Adrenal gland (tissue), 19 donors: ENCODE measurements at regions of chr3 and their contacts with region 1.

Region 1: GRCh38 chr3:195863121-195864006 is 45.0 kb downstream of the TNK2 start:
- DNase-seq: peak; percentile 89 to 97 (median 95)
- H3K4me3 ChIP-seq: no peak overlapping the region
- H3K27ac ChIP-seq: peak overlapping the region in 3 of 5 donors; percentile 31 to 72 (median 70)
- H3K4me1 ChIP-seq: peaks cover 0 to 18% of the 10 kb centered on the region in 2 donors
- H3K27me3 ChIP-seq: no peaks in the 10 kb centered on the region
- CTCF ChIP-seq: peak; percentile 85 to 96 (median 94)
- POLR2A ChIP-seq: no peak

Region 2: DNA sequence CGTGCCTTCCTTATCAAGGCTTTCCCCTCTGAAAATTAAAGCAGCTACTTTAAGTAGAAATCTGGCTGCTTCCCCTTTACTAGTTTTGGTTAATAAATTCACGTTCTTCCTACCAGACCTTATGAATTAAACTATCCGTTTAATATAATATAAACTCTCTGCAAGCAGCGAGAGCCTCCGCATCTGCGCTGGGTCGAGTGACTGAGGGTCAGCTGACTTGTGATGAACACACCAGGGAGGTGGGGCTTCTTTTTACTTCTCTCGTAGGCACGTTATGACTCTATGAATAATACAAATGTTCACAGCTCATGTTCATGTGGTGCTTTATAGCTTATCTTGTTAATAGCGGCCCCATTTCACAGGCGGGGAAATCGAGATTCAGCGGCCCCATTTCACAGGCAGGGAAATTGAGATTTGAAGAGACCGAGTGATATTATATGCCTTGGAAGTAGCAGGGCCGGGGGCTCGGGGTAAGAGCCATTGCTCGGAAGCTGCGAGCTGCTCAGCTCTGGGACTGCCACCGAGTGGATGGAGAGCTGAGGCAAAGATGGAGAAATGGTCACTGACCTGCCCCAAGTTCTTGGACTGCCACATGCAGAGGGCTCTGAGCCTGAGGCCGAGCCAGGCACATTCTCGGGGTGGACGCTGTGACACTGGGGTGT is 59.9 kb before region 1 on chr3:
- intact Hi-C with region 1: no loop called
- DNase-seq: peak in 1 of 7 donors; percentile 10
- H3K4me3 ChIP-seq: no peak overlapping the region
- H3K27ac ChIP-seq: no peak overlapping the region
- H3K4me1 ChIP-seq: peaks cover 0 to 5% of the 10 kb centered on the region in 2 donors
- H3K27me3 ChIP-seq: no peaks in the 10 kb centered on the region
- CTCF ChIP-seq: no peak
- POLR2A ChIP-seq: no peak

Region 3: DNA sequence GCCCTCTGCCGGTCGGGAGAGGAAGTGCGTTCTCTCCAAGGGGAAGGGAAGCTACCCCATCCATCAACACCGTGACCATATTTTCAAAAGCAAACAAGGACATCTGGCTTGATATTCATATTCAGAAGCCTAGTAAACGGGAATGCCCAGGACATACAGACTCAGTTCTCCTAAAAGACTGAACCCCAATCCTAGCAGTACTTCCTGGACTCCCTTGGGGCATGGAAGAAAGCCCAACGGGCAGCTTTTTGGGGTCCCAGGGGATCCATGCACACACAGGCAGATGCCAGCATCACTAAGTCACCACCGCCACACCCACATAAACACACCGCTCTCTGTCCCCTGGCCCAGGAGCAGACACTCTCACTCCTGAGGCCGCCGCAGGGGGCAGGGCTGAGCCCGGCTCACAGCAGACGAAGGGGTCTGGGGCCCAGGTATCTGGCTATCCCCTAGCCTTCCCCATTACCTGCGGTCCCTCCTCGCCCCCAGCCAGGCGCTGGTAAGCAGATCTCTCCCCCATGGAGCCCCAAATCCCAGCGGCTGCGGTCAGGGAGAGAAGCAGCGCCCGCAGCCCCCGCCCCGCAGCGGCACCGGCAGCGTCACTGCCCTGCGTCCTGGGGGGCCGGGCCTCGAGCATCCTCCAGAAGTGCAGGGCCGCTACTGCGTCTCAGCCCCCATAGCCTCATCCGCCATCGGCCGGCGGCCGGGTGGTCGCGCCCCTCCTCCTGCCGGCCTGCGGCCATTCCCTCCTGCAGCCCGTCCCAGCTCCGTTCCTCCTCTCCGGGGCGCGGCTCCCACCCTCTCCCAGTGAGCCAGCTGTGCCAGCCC is 31.6 kb after region 1 on chr3:
- intact Hi-C with region 1: loop called (anchors 2 kb)
- DNase-seq: peak in 5 of 7 donors; percentile 27 to 74 (median 40)
- H3K4me3 ChIP-seq: peak overlapping the region in 2 of 4 donors; percentile 23 to 72
- H3K27ac ChIP-seq: peak overlapping the region in 4 of 5 donors; percentile 62 to 91 (median 86)
- H3K4me1 ChIP-seq: peaks cover 24 to 46% of the 10 kb centered on the region in 2 donors
- H3K27me3 ChIP-seq: no peaks in the 10 kb centered on the region
- CTCF ChIP-seq: peak; percentile 90 to 97 (median 94)
- POLR2A ChIP-seq: no peak

Region 4: GRCh38 chr3:195914648-195915473 is 51.5 kb after region 1 on chr3:
- intact Hi-C with region 1: loop called (anchors 2 to 5 kb)
- DNase-seq: peak; percentile 92 to 99 (median 98)
- H3K4me3 ChIP-seq: no peak overlapping the region
- H3K27ac ChIP-seq: peak overlapping the region in 4 of 5 donors; percentile 18 to 88 (median 59)
- H3K4me1 ChIP-seq: peaks cover 0 to 9% of the 10 kb centered on the region in 2 donors
- H3K27me3 ChIP-seq: no peaks in the 10 kb centered on the region
- CTCF ChIP-seq: peak; percentile 96 to 99 (median 98)
- POLR2A ChIP-seq: no peak